MCF 10A (cell line): ENCODE measurements at regions of chr2 and their contacts with region 1.

Region 1: DNA sequence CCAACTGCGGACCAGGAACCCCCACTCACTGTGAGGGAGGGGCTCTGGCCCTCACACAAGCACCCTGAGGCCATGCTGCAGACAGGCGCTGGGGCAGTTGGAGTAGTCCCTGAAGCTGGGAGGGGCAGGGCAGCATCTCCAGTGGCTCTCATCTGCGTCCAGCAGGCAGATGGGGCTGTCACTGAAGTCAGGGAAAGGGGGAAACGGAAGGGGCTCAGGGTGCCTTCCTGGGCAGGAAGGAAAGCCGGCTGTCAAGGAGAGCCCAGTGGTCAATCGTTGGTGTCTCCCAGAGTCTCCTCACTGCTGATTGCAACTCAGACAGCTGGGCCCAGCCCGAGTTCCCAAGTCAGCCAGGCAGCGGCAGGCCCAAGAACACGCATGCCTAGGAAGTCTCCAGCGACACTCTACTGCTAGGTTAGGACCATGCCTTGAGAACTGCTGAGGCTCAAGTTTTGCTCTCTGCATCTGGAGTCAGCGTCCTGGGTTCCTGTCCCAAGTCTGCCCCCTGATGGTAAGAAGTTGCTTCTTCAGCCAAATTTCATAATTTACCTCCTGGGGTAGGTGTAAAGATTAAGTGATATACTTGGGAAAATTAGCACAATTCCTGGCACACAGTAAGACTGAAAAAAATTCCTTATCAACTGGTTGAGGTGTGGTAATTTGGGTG is 27.5 kb upstream of the NMUR1 start:
- DNase-seq: peak; percentile 66
- H3K4me3 Mint-ChIP-seq: no peak overlapping the region
- H3K27ac Mint-ChIP-seq: no peak overlapping the region
- H3K4me1 Mint-ChIP-seq: no peaks in the 10 kb centered on the region
- H3K27me3 Mint-ChIP-seq: no peaks in the 10 kb centered on the region
- CTCF ChIP-seq: peak; percentile 57

Region 2: DNA sequence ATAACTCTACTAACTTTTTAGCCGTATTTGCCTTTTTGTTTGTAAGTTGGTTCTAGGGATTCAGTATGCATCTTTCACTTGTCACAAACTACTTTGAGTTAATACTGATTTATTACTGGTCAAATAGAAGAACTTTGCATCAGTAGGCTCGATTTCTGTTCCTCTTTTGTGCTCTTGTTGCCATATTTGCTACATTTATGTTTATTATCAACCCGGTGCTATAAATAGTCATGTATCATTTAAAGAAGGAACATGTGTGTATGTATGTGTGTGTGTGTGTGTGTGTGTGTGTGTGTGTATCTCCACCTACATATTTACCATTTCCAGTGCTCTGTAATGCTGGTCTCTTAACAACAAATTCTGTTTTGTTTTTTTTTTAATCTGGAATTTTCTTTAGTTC is 241.8 kb before region 1 on chr2:
- CTCF ChIA-PET with region 1: no interaction called
- POLR2A ChIA-PET with region 1: no interaction called
- intact Hi-C with region 1: no loop called
- DNase-seq: no peak
- H3K4me3 Mint-ChIP-seq: no peak overlapping the region
- H3K27ac Mint-ChIP-seq: no peak overlapping the region
- H3K4me1 Mint-ChIP-seq: no peaks in the 10 kb centered on the region
- H3K27me3 Mint-ChIP-seq: no peaks in the 10 kb centered on the region
- CTCF ChIP-seq: no peak

Region 3: DNA sequence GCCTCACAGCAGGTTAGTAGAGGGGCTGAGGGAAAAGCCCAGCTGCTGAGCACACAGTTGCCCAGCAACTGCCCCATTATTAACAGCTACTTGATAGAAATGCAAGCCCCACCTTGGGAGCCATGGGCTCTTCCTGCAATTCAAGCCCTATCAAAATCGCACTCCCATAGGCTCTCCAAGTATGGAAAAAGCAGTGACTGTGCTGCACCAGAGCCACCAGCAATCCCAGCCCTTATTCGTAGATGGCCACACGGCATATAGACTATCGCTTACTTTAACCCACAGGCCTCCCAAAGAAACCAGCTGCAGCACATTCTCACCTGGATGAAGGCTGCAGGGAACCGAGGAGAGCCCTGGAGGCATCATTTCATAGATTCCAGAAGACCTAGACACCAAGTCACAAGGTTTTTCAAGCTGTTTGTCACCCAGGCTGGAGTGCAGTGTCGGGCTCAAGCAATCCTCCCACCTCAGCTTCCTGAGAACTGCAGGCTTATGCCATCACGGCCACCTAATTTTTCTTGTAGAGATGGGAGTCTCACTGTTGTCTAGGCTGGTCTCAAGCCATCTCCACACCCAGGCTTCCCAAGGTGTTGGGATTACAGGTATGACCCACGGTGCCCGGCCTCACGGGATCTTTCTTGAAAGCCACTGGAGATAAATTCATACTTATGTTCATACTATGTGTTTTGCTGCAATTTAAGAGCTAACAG is 104.8 kb before region 1 on chr2:
- CTCF ChIA-PET with region 1: no interaction called
- POLR2A ChIA-PET with region 1: no interaction called
- intact Hi-C with region 1: no loop called
- DNase-seq: peak; percentile 30
- H3K4me3 Mint-ChIP-seq: no peak overlapping the region
- H3K27ac Mint-ChIP-seq: peak overlapping the region; percentile 42
- H3K4me1 Mint-ChIP-seq: no peaks in the 10 kb centered on the region
- H3K27me3 Mint-ChIP-seq: no peaks in the 10 kb centered on the region
- CTCF ChIP-seq: no peak

Region 4: GRCh38 chr2:231482806-231483391 is 74.8 kb before region 1 on chr2:
- CTCF ChIA-PET with region 1: interaction called, 20 read pairs
- POLR2A ChIA-PET with region 1: interaction called, 3 read pairs
- intact Hi-C with region 1: loop called (anchors 1 kb)
- DNase-seq: peak; percentile 70
- H3K4me3 Mint-ChIP-seq: peak overlapping the region; percentile 38
- H3K27ac Mint-ChIP-seq: peak overlapping the region; percentile 75
- H3K4me1 Mint-ChIP-seq: peaks cover 9% of the 10 kb centered on the region
- H3K27me3 Mint-ChIP-seq: no peaks in the 10 kb centered on the region
- CTCF ChIP-seq: peak; percentile 86